Activated CD8-positive, alpha-beta T cell treated with anti-CD3 and anti-CD28 coated beads, Interleukin-2, amount 10 ng/mL, durations not matched to agents 7 days and 5 days (primary cell): ENCODE measurements at regions of chr1 and their contacts with region 1.

Region 1: GRCh38 chr1:46442317-46443161 is 47.1 kb upstream of the DMBX1 start:
- DNase-seq: peak; percentile 77
- ATAC-seq: peak; percentile 79
- H3K4me3 Mint-ChIP-seq: peak overlapping the region; percentile 77
- H3K27ac Mint-ChIP-seq: peak overlapping the region; percentile 17
- H3K4me1 Mint-ChIP-seq: peaks cover 10% of the 10 kb centered on the region
- H3K27me3 Mint-ChIP-seq: peaks cover 26% of the 10 kb centered on the region

Region 2: GRCh38 chr1:46431691-46432090 is 10.8 kb before region 1 on chr1:
- CTCF ChIA-PET with region 1: interaction called, 17 read pairs
- POLR2A ChIA-PET with region 1: no interaction called
- DNase-seq: no peak
- ATAC-seq: no peak
- H3K4me3 Mint-ChIP-seq: no peak overlapping the region
- H3K27ac Mint-ChIP-seq: no peak overlapping the region
- H3K4me1 Mint-ChIP-seq: no peaks in the 10 kb centered on the region
- H3K27me3 Mint-ChIP-seq: peaks cover 13% of the 10 kb centered on the region

Region 3: GRCh38 chr1:46452931-46453325 is 10.4 kb after region 1 on chr1:
- CTCF ChIA-PET with region 1: interaction called, 10 read pairs
- POLR2A ChIA-PET with region 1: no interaction called
- DNase-seq: no peak
- ATAC-seq: no peak
- H3K4me3 Mint-ChIP-seq: no peak overlapping the region
- H3K27ac Mint-ChIP-seq: no peak overlapping the region
- H3K4me1 Mint-ChIP-seq: peaks cover 6% of the 10 kb centered on the region
- H3K27me3 Mint-ChIP-seq: peaks cover 44% of the 10 kb centered on the region

Region 4: GRCh38 chr1:46477153-46477929 is 34.8 kb after region 1 on chr1:
- CTCF ChIA-PET with region 1: interaction called, 12 read pairs
- POLR2A ChIA-PET with region 1: no interaction called
- DNase-seq: peak; percentile 82
- ATAC-seq: peak; percentile 73
- H3K4me3 Mint-ChIP-seq: no peak overlapping the region
- H3K27ac Mint-ChIP-seq: no peak overlapping the region
- H3K4me1 Mint-ChIP-seq: no peaks in the 10 kb centered on the region
- H3K27me3 Mint-ChIP-seq: peaks cover 36% of the 10 kb centered on the region

Region 5: GRCh38 chr1:46527474-46528296 is 85.1 kb after region 1 on chr1:
- CTCF ChIA-PET with region 1: interaction called, 154 read pairs
- POLR2A ChIA-PET with region 1: interaction called, 3 read pairs
- DNase-seq: peak; percentile 86
- ATAC-seq: peak; percentile 67
- H3K4me3 Mint-ChIP-seq: no peak overlapping the region
- H3K27ac Mint-ChIP-seq: no peak overlapping the region
- H3K4me1 Mint-ChIP-seq: peaks cover 20% of the 10 kb centered on the region
- H3K27me3 Mint-ChIP-seq: peaks cover 18% of the 10 kb centered on the region

Region 6: DNA sequence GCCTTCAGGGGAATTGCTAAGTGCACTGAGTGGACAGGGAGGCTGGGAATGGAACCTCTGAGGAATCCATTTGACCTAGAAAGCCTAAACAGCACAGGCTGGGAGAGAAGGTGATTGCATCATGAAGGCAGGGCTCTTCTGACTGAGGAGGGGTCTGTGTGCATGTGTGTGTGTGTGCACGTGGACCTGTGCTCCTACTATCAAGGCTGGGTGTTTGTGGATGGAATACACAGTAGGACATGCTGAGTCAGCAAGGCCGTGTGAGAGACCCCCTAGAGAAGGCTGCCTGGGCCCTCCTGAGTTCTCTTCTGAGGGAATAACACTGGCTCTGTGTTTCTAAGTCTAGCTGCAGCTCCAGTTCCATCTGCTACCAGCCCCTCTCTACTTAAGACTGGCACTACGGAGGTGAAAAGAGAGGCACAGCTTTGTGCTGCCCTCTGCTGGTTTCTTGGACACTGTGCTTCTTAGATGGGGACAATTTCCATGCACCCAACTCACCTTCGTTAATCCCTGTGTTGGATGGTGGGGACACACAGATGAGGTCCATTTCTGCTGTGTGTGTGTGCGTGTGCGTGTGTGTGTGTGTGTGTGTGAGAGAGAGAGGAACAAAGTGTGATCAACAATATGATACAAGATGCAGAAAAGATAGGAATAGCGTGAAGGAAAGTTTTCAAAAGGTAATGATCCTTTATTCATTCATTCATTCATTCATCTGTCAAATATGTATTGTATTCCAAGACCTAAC is 282.6 kb after region 1 on chr1:
- CTCF ChIA-PET with region 1: interaction called, 14 read pairs
- POLR2A ChIA-PET with region 1: no interaction called
- DNase-seq: peak; percentile 84
- ATAC-seq: peak; percentile 98
- H3K4me3 Mint-ChIP-seq: no peak overlapping the region
- H3K27ac Mint-ChIP-seq: no peak overlapping the region
- H3K4me1 Mint-ChIP-seq: peaks cover 5% of the 10 kb centered on the region
- H3K27me3 Mint-ChIP-seq: peaks cover 23% of the 10 kb centered on the region